ENCODE measurements at regions of chr14 and their contacts with region 1.

Region 1: DNA sequence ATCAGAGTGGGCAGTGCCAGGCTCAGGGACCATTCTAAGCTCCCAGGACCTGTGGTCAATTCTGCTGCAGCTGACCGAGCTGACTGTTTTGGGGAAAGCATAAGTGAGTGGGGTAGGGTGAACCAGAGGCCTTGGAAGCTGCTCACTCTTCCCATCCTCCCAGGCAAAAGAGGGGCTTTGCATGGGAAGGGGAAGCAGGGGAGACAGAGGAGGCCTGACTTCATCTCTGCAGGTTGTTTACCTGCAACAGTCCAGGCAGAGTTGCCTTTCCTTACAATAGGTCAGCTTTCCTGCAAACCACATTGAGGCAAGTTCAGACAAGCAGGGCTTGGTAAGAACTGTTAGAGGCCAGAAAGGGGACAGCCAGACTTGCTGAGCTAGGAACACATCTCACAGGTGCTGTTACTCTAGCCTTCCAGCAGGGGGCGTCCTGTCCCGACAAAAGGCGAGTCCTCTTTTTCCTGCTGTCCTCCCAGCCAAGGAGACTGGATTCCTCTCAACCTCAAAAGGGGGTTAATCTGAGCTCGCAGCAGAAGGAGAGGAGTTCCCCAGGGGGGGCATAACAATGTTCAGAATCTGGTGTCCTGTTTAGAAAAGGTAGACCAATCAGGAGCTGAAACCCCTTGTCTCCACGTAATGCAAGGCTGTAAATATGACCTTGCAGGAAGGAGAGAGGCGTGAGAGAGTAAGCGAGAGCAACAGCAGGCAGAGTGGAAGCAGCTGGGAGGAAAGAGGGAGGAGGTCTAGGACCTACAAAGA is 4.3 kb upstream of the DHRS2 start:
- DNase-seq: peak; percentile 82
- H3K4me3 Mint-ChIP-seq: peak overlapping the region; percentile 35
- H3K27ac Mint-ChIP-seq: no peak overlapping the region
- H3K4me1 Mint-ChIP-seq: peaks cover 5% of the 10 kb centered on the region
- H3K27me3 Mint-ChIP-seq: no peaks in the 10 kb centered on the region

Region 2: GRCh38 chr14:23605931-23606585 is 25.8 kb before region 1 on chr14:
- CTCF ChIA-PET with region 1: interaction called, 69 read pairs
- intact Hi-C with region 1: no loop called
- DNase-seq: peak; percentile 20
- H3K4me3 Mint-ChIP-seq: no peak overlapping the region
- H3K27ac Mint-ChIP-seq: no peak overlapping the region
- H3K4me1 Mint-ChIP-seq: peaks cover 35% of the 10 kb centered on the region
- H3K27me3 Mint-ChIP-seq: no peaks in the 10 kb centered on the region

Region 3: GRCh38 chr14:23646648-23647549 is 15.0 kb after region 1 on chr14:
- CTCF ChIA-PET with region 1: interaction called, 28 read pairs
- intact Hi-C with region 1: no loop called
- DNase-seq: no peak
- H3K4me3 Mint-ChIP-seq: no peak overlapping the region
- H3K27ac Mint-ChIP-seq: no peak overlapping the region
- H3K4me1 Mint-ChIP-seq: no peaks in the 10 kb centered on the region
- H3K27me3 Mint-ChIP-seq: no peaks in the 10 kb centered on the region

Region 4: GRCh38 chr14:23665375-23666192 is 33.7 kb after region 1 on chr14:
- CTCF ChIA-PET with region 1: interaction called, 17 read pairs
- intact Hi-C with region 1: no loop called
- DNase-seq: peak; percentile 55
- H3K4me3 Mint-ChIP-seq: no peak overlapping the region
- H3K27ac Mint-ChIP-seq: no peak overlapping the region
- H3K4me1 Mint-ChIP-seq: no peaks in the 10 kb centered on the region
- H3K27me3 Mint-ChIP-seq: no peaks in the 10 kb centered on the region

Region 5: GRCh38 chr14:23929822-23930294 is 298.0 kb after region 1 on chr14:
- CTCF ChIA-PET with region 1: interaction called, 21 read pairs
- intact Hi-C with region 1: loop called (anchors 1 kb)
- DNase-seq: peak; percentile 93
- H3K4me3 Mint-ChIP-seq: no peak overlapping the region
- H3K27ac Mint-ChIP-seq: no peak overlapping the region
- H3K4me1 Mint-ChIP-seq: no peaks in the 10 kb centered on the region
- H3K27me3 Mint-ChIP-seq: peaks cover 2% of the 10 kb centered on the region

Region 6: GRCh38 chr14:24075485-24076301 is 443.8 kb after region 1 on chr14:
- CTCF ChIA-PET with region 1: no interaction called
- intact Hi-C with region 1: no loop called
- DNase-seq: no peak
- H3K4me3 Mint-ChIP-seq: no peak overlapping the region
- H3K27ac Mint-ChIP-seq: no peak overlapping the region
- H3K4me1 Mint-ChIP-seq: peaks cover 12% of the 10 kb centered on the region
- H3K27me3 Mint-ChIP-seq: no peaks in the 10 kb centered on the region

Measured in activated naive CD4-positive, alpha-beta T cell treated with anti-CD3 and anti-CD28 coated beads for 36 hours (primary cell).